ENCODE measurements at regions of chr19 and their contacts with region 1.

Region 1: GRCh38 chr19:46728693-46729676 is 12.1 kb upstream of the PRKD2 start:
- DNase-seq: peak; percentile 82
- ATAC-seq: peak; percentile 97
- H3K4me3 Mint-ChIP-seq: no peak overlapping the region
- H3K27ac Mint-ChIP-seq: no peak overlapping the region
- H3K4me1 Mint-ChIP-seq: peaks cover 30% of the 10 kb centered on the region
- H3K27me3 Mint-ChIP-seq: no peaks in the 10 kb centered on the region
- CTCF ChIP-seq: no peak

Region 2: GRCh38 chr19:46373421-46374359 is 355.3 kb before region 1 on chr19:
- CTCF ChIA-PET with region 1: no interaction called
- POLR2A ChIA-PET with region 1: no interaction called
- intact Hi-C with region 1: no loop called
- DNase-seq: no peak
- ATAC-seq: no peak
- H3K4me3 Mint-ChIP-seq: no peak overlapping the region
- H3K27ac Mint-ChIP-seq: no peak overlapping the region
- H3K4me1 Mint-ChIP-seq: peaks cover 2% of the 10 kb centered on the region
- H3K27me3 Mint-ChIP-seq: no peaks in the 10 kb centered on the region
- CTCF ChIP-seq: no peak

Region 3: GRCh38 chr19:46529622-46530462 is 199.1 kb before region 1 on chr19:
- CTCF ChIA-PET with region 1: interaction called, 7 read pairs
- POLR2A ChIA-PET with region 1: no interaction called
- intact Hi-C with region 1: loop called (anchors 1 kb)
- DNase-seq: peak; percentile 63
- ATAC-seq: peak; percentile 72
- H3K4me3 Mint-ChIP-seq: no peak overlapping the region
- H3K27ac Mint-ChIP-seq: no peak overlapping the region
- H3K4me1 Mint-ChIP-seq: peaks cover 10% of the 10 kb centered on the region
- H3K27me3 Mint-ChIP-seq: peaks cover 9% of the 10 kb centered on the region
- CTCF ChIP-seq: peak; percentile 84

Region 4: DNA sequence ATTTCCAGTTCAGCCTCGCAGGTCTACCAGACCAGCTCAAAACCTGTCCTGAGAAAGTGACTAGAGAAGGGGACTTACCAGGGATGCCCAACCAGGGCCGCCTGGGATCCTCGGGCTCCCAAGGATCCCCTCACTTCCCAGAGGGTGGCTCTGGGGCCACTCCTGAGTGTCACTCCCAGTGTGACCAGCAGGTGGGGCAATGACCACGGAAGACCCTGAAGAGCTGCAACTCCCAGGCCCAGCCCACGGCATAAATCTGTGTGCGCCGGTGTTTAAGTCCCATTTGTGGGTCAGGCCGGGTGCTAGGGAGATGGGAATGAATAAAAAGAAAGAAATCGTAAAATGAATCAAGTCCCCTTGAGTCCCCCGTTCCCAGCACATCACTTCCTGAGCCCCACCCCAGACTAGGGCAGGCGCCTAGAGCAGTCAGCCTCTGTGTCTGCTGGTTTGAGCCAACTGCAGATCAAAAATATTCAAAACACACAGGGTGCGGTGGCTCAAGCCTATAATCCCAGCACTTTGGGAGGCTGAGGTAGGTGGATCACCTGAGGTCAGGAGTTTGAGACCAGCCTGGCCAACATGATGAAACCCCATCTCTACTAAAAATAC is 114.8 kb before region 1 on chr19:
- CTCF ChIA-PET with region 1: interaction called, 13 read pairs
- POLR2A ChIA-PET with region 1: interaction called, 9 read pairs
- intact Hi-C with region 1: no loop called
- DNase-seq: peak; percentile 82
- ATAC-seq: peak; percentile 71
- H3K4me3 Mint-ChIP-seq: no peak overlapping the region
- H3K27ac Mint-ChIP-seq: peak overlapping the region; percentile 63
- H3K4me1 Mint-ChIP-seq: peaks cover 66% of the 10 kb centered on the region
- H3K27me3 Mint-ChIP-seq: no peaks in the 10 kb centered on the region
- CTCF ChIP-seq: peak; percentile 42

Region 5: GRCh38 chr19:46704379-46705076 is 24.5 kb before region 1 on chr19:
- CTCF ChIA-PET with region 1: interaction called, 168 read pairs
- POLR2A ChIA-PET with region 1: interaction called, 13 read pairs
- intact Hi-C with region 1: loop called (anchors 1 kb)
- DNase-seq: peak; percentile 86
- ATAC-seq: peak; percentile 95
- H3K4me3 Mint-ChIP-seq: no peak overlapping the region
- H3K27ac Mint-ChIP-seq: peak overlapping the region; percentile 18
- H3K4me1 Mint-ChIP-seq: peaks cover 6% of the 10 kb centered on the region
- H3K27me3 Mint-ChIP-seq: no peaks in the 10 kb centered on the region
- CTCF ChIP-seq: peak; percentile 71

Region 6: DNA sequence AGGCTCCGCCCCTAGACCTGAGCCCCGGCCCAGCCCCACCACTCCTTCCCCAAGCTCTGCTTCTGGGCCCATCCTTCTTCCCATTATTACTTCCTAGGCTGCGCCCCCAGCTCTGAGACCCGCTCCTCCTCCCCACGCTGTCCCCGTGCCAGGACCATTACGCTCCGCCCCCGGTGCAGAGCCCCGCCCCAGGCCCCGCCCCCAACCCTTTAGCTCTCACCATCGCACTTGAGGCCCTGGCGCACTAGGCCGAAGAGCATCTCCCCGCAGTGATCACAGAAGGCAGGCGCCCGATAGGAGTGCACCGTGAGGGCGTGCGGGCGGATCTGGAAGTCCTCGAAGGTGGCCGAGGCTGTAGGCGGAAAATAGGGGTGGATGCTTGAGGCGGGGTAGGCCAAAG is 18.3 kb before region 1 on chr19:
- CTCF ChIA-PET with region 1: interaction called, 168 read pairs
- POLR2A ChIA-PET with region 1: interaction called, 50 read pairs
- intact Hi-C with region 1: loop called (anchors 1 kb)
- DNase-seq: no peak
- ATAC-seq: no peak
- H3K4me3 Mint-ChIP-seq: no peak overlapping the region
- H3K27ac Mint-ChIP-seq: no peak overlapping the region
- H3K4me1 Mint-ChIP-seq: peaks cover 28% of the 10 kb centered on the region
- H3K27me3 Mint-ChIP-seq: no peaks in the 10 kb centered on the region
- CTCF ChIP-seq: no peak

Region 7: DNA sequence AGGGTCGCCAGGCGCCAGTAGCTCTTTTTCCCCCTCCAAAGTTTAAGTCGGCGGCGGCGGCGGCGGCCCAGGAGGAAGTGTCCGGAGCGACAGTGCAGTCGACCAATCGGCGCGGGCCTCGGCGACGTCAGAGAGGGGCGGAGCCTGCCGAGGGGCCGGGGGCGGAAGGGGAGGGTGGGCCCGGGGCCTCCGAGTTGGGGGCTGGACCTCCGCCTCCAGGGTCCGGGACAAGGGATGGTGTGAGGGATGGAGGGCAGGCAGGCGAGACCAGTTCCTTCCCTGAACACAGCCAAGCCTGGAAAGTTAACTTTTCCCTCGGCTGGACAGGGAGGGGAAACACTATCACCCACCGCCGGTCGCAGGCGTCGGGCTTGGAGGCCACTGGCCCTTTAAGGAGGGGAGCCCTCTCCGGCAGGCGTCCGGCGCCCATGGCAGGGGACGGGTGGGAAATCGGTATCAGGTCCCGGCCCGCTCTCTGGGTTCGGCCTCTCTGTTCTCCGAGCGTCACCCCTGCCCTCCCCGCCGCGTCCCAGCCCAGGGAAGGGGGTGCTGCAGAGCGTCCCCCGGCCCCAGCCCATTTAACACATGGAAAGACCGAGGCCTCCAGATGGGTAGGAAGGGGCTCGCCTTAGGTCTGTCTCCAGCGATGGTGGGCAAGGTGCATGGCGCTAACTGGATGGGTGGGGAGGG is 11.8 kb before region 1 on chr19 and contains the start of gene PRKD2:
- CTCF ChIA-PET with region 1: interaction called, 15 read pairs
- POLR2A ChIA-PET with region 1: interaction called, 50 read pairs
- intact Hi-C with region 1: loop called (anchors 1 kb)
- DNase-seq: peak; percentile 92
- ATAC-seq: peak; percentile 47
- H3K4me3 Mint-ChIP-seq: peak within 1 kb of the TSS; percentile 94
- H3K27ac Mint-ChIP-seq: peak within 1 kb of the TSS; percentile 97
- H3K4me1 Mint-ChIP-seq: peaks cover 76% of the 10 kb centered on the region
- H3K27me3 Mint-ChIP-seq: no peaks in the 10 kb centered on the region
- CTCF ChIP-seq: no peak
- total RNA-seq, gene PRKD2: 157 and 191 TPM in 2 replicates

Region 8: GRCh38 chr19:46944918-46945628 is 216.1 kb after region 1 on chr19:
- CTCF ChIA-PET with region 1: no interaction called
- POLR2A ChIA-PET with region 1: no interaction called
- intact Hi-C with region 1: no loop called
- DNase-seq: no peak
- ATAC-seq: no peak
- H3K4me3 Mint-ChIP-seq: no peak overlapping the region
- H3K27ac Mint-ChIP-seq: no peak overlapping the region
- H3K4me1 Mint-ChIP-seq: no peaks in the 10 kb centered on the region
- H3K27me3 Mint-ChIP-seq: no peaks in the 10 kb centered on the region
- CTCF ChIP-seq: no peak